ENCODE measurements at regions of chr22 and their contacts with region 1.

Region 1: DNA sequence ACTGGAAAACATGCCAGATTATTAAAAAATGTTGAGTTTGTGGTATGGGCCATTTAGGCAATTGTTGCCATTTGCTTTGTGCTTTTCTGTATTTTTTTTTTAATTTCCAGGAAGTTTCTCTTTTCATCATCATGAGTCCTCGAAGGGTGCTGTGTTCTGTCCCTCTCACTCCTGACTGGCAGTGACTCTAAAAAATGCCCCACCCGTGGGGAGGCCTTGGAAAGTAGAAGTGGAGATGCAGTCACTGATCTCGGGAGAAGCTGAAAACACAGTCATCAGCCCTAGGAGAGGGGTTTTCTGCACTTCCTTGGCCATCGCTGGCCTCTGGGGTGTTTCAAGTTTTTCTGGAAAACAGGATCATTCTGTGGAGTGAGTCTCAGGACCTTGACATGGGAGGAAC is 98.5 kb upstream of the GRK3 start:
- DNase-seq: no peak
- H3K4me3 ChIP-seq: no peak overlapping the region
- H3K27ac ChIP-seq: no peak overlapping the region
- H3K4me1 ChIP-seq: no peaks in the 10 kb centered on the region
- H3K27me3 ChIP-seq: no peaks in the 10 kb centered on the region
- CTCF ChIP-seq: no peak

Region 2: DNA sequence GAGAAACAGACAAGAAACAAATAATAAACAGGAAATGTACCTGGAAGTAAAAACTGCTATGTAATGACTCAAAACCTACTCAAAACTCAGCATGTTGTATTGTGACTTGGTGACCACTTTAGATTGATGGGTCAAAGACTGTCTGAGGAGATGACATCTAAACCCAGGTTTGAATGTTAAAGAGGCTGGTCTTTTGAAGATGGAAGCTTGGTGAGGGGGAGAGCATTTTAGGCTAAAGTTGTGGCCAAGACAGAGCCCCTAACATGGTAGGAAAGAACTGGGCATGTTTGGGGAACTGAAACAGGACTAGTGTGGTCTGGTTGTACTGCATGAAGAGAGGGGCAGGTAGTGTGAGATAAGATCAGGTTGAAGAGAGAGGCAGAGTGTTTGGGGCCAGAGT is 190.8 kb after region 1 on chr22:
- intact Hi-C with region 1: no loop called
- DNase-seq: no peak
- H3K4me3 ChIP-seq: no peak overlapping the region
- H3K27ac ChIP-seq: no peak overlapping the region
- H3K4me1 ChIP-seq: no peaks in the 10 kb centered on the region
- H3K27me3 ChIP-seq: no peaks in the 10 kb centered on the region
- CTCF ChIP-seq: no peak

Region 3: GRCh38 chr22:25696763-25697667 is 231.1 kb after region 1 on chr22:
- intact Hi-C with region 1: loop called (anchors 5 kb)
- DNase-seq: peak in 2 of 5 donors; percentile 43 to 64
- H3K4me3 ChIP-seq: no peak overlapping the region
- H3K27ac ChIP-seq: no peak overlapping the region
- H3K4me1 ChIP-seq: peaks cover 0 to 4% (median 0%) of the 10 kb centered on the region in 3 donors
- H3K27me3 ChIP-seq: no peaks in the 10 kb centered on the region
- CTCF ChIP-seq: no peak

Region 4: DNA sequence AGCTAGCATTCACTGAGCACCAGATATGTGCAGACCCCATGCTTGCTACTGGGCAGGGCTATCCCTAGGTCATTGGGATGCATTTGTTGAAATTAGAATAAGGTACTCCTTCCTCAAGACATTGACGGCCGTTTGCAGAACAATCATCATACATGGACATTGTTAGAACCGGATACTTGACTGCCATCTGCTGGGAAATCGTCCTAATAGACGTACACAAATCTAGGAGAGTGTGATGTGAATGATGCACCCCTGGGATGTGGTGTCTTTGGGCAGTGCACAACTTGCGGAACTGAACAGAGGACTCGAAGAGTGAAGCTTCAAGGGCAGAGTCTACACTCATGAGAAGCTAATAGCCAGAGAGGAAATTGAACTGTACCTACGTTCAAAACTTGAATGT is 311.9 kb after region 1 on chr22:
- intact Hi-C with region 1: loop called (anchors 10 kb)
- DNase-seq: peak in 1 of 5 donors; percentile 41
- H3K4me3 ChIP-seq: no peak overlapping the region
- H3K27ac ChIP-seq: no peak overlapping the region
- H3K4me1 ChIP-seq: no peaks in the 10 kb centered on the region
- H3K27me3 ChIP-seq: no peaks in the 10 kb centered on the region
- CTCF ChIP-seq: no peak